ENCODE measurements at regions of chr6 and their contacts with region 1.

Region 1: DNA sequence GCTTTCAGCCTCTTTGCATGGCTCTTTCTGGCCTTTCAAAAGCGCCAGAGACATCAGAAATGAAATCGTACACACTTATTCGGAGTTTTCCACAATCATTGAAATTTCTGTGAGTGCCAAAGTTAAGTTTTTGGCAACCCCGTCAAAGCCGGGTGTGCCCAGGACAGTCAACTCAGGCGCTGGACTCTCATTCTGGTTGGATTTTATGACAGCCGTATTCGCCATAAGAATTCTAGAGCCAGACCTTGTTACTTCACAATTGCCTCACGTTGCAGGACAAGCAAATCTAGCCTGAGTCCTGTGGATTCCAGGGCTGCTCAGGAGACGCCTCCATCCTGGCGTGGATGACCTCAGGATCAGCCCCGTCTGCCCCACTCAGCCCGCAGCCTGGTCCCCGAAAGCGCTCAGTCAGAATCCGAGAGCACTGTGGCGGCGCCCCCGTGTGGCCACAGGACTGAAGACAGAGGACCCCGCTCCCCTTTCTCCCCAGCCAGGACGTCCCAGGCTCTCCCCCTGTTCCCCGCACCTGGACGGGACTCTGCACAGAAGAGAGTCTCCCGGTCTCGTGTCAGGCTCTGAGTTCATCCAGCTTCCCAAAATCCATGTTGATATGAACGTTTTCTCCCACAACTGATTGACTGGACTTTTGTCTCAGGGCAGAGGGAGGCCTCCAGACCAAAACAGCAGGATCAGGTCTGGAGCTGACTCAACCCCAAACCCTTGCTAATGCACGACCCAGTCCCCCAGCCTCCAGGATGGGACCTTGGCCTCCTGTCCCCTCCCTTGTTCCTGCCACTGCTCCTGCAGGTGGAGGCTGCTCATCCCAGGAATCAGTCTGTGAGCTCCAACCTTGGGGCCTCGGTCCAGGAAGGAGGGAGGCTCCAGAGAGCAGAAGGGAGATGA is 38.2 kb downstream of the MICA start:
- DNase-seq: peak; percentile 93
- ATAC-seq: peak; percentile 98

Region 2: DNA sequence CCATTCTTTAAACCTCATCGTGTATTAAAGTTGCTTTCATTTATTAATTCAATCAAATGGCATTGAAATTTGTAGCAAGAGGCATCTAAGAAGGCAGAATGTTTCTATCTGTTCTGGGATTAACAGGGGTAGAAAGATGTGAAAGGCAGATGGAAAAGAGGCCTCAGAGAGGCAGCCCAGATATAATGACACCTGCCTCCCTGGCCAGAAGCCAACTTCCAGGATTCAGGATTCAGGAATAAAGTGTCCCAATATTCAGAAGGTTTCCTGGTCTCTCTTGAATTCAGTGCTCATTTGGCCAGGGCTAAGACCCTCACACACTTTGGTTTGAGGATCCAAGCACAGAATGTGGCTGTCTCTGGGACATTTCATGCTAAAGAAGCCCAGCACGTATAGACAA is 124.6 kb before region 1 on chr6:
- intact Hi-C with region 1: no loop called
- DNase-seq: no peak
- ATAC-seq: no peak

Region 3: GRCh38 chr6:31399589-31400466 is 41.8 kb before region 1 on chr6:
- intact Hi-C with region 1: loop called (anchors 5 kb)
- DNase-seq: peak; percentile 96
- ATAC-seq: peak; percentile 95

Measured in sciatic nerve (tissue), 2 donors.